SK-N-SH (cell line): ENCODE measurements at regions of chr17 and their contacts with region 1.

Region 1: GRCh38 chr17:60421273-60421934 is 885 bp upstream of the CHCT1 start:
- DNase-seq: peak; percentile 97
- H3K4me3 ChIP-seq: peak overlapping the region; percentile 45 to 63
- H3K27ac ChIP-seq: no peak overlapping the region
- H3K4me1 ChIP-seq: no peaks in the 10 kb centered on the region; a peak in 1 of 4 replicates
- H3K27me3 ChIP-seq: no peaks in the 10 kb centered on the region
- CTCF ChIP-seq: peak; percentile 100
- EP300 ChIP-seq: no peak
- RAD21 ChIP-seq: peak; percentile 66

Region 2: DNA sequence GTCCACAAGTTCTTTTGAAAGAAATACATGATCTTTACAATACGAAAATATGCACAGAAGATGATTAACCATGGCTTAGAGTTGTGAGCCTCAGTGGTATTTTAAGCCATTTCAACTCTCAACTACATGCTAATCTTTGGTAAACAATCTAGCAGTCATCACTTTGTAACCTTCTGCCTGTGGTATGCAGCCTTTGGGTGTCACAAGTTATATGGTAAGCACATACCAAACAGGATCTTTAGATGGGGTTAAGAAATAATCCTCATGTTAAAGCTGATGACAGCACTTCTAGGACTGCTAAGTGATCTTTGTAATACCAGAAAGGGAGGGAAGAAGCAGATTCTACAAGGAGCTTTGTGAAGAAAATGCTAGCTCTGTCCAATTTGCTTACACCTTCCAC is 197.3 kb before region 1 on chr17:
- CTCF ChIA-PET with region 1: interaction called, 12 read pairs
- POLR2A ChIA-PET with region 1: no interaction called
- DNase-seq: no peak
- H3K4me3 ChIP-seq: no peak overlapping the region
- H3K27ac ChIP-seq: no peak overlapping the region
- H3K4me1 ChIP-seq: no peaks in the 10 kb centered on the region; a peak in 1 of 4 replicates
- H3K27me3 ChIP-seq: no peaks in the 10 kb centered on the region
- CTCF ChIP-seq: no peak
- EP300 ChIP-seq: no peak
- RAD21 ChIP-seq: no peak

Region 3: GRCh38 chr17:60392042-60392844 is 29.2 kb before region 1 on chr17 and contains the start of gene USP32:
- CTCF ChIA-PET with region 1: interaction called, 11 read pairs
- POLR2A ChIA-PET with region 1: no interaction called
- DNase-seq: peak; percentile 98
- H3K4me3 ChIP-seq: peak within 1 kb of the TSS; percentile 65 to 86
- H3K27ac ChIP-seq: peak within 1 kb of the TSS; percentile 98 to 99
- H3K4me1 ChIP-seq: peaks cover 12 to 19% of the 10 kb centered on the region in 2 experiments
- H3K27me3 ChIP-seq: no peaks in the 10 kb centered on the region
- CTCF ChIP-seq: peak; percentile 35
- EP300 ChIP-seq: peak in 1 of 2 experiments; percentile 33; a peak in 1 of 4 replicates
- RAD21 ChIP-seq: peak; percentile 7; the same call in 1 of the 2 replicates
- polyA plus RNA-seq, gene USP32: 25.6 and 31.8 TPM in 2 replicates

Region 4: DNA sequence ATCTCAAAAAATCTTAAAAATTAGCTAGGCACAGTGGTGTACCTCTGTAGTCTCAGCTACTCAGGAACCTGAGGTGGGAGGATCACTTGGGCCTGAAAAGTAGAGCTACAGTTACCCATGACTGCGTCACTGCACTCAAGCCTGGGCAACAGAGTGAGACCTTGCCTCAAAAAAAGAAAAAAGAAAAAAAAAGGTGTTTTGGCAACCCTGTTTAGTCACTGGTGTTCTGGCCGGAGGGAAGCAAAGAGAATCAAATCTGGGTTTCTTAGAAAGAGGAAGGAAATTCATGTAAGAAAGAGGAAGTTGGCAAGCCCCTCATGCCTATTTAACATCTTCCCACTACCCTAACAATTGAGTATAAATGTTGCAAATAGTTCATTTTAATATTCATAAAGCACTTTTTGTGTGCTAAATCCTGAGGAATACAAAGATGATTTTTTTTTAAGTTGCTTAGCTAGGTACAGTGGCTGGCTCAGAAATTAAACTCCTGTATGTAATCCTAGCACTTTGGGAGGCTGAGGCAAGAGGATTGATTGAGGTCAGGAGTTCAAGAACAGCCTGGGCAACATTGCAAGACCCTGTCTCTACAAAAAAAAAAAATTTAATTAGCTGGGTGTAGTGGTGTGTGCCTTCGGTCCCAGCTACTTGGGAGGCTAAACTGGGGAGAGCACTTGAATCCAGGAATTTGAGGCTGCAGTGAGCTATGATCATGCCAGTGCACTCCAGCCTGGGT is 23.0 kb before region 1 on chr17:
- CTCF ChIA-PET with region 1: interaction called, 128 read pairs
- POLR2A ChIA-PET with region 1: no interaction called
- DNase-seq: no peak
- H3K4me3 ChIP-seq: no peak overlapping the region
- H3K27ac ChIP-seq: no peak overlapping the region
- H3K4me1 ChIP-seq: no peaks in the 10 kb centered on the region
- H3K27me3 ChIP-seq: no peaks in the 10 kb centered on the region
- CTCF ChIP-seq: no peak
- EP300 ChIP-seq: no peak
- RAD21 ChIP-seq: no peak

Region 5: DNA sequence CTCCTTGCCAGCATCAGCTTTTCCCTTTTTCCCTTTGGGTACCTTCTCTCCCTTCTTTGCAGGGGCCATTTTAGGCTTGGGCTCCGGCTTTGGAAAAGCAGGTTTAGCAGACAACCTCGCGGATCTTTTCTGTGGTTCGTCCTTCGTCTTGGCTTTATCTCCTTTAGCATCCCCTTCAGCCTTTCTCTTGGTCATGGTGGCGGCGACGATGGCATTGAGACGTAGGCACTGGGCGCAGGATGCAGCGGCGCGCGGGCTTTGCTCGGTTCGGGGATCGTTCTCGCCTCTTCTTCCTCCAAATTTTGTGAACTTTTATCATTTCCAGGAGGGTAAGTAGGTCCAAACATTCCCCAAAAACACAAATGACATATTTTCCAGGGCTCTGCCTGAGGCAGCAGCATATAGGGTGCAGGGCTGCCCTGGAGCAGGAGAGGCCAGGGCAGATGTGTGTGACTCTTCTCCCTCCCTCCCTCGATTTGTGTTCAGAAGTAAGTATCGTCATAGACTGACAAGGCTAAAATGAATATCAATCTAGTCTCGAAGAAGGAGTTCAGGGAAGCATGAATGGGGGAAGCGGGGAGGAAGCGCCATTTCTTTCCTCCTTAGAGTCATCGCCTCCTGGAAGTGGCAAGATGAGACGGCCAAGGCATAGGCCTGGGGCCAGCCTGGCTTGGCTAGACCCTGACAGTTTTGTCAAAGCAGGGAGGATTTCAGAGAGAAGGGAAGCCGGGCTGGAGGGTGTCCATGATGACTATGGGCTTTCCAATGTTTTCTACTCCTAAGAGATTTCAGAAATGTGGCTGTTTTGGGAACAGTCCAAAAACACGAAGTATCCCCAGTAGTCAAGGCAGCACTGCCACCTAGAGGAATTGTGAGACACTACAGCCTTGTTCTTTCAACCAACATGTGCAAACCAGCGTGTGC is 14.1 kb after region 1 on chr17:
- CTCF ChIA-PET with region 1: interaction called, 12 read pairs
- POLR2A ChIA-PET with region 1: no interaction called
- DNase-seq: peak; percentile 85
- H3K4me3 ChIP-seq: no peak overlapping the region; a peak in 1 of 4 replicates
- H3K27ac ChIP-seq: peak overlapping the region in 1 of 2 experiments; percentile 33; a peak in 1 of 4 replicates
- H3K4me1 ChIP-seq: peaks cover 0 to 4% of the 10 kb centered on the region in 2 experiments; a peak in 1 of 4 replicates
- H3K27me3 ChIP-seq: no peaks in the 10 kb centered on the region
- CTCF ChIP-seq: peak; percentile 99
- EP300 ChIP-seq: no peak; a peak in 1 of 4 replicates
- RAD21 ChIP-seq: peak; percentile 100